PC-9 (cell line): ENCODE measurements at regions of chr15 and their contacts with region 1.

Region 1: GRCh38 chr15:88246666-88247446 is 9.7 kb downstream of the NTRK3 start:
- DNase-seq: peak in 1 of 2 experiments; percentile 63
- H3K4me3 ChIP-seq: no peak overlapping the region
- H3K27ac ChIP-seq: no peak overlapping the region
- H3K4me1 ChIP-seq: no peaks in the 10 kb centered on the region
- H3K27me3 ChIP-seq: peaks cover 7% of the 10 kb centered on the region; the same call in 1 of the 2 replicates
- CTCF ChIP-seq: peak; percentile 89

Region 2: DNA sequence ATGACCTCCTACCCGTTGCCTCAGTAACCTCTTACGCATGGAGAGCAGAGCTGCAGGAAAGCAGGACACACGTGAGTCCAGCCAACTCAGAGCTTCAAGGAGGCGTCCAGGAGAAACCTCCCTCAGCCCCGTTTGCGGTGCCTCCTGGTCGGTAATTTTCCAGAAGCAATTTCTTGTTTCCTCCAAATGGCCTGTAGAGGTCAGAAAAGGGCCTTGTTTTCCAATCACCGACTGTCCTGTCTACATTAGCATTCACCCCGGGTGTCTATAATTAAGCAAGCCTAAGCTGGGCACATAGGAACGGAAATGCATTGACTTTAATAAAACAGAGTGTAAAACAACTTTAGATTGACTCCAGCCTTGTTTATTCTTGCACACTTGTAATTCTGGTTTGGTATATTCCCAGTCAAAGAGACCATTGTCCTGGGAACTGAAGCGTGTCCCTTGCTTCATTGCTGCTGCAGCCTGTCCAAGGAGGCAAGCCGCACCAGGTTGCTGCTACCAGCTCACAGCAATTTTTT is 1331.0 kb before region 1 on chr15:
- CTCF ChIA-PET with region 1: no interaction called
- POLR2A ChIA-PET with region 1: no interaction called
- intact Hi-C with region 1: loop called (anchors 5 kb)
- DNase-seq: no peak
- H3K4me3 ChIP-seq: no peak overlapping the region
- H3K27ac ChIP-seq: no peak overlapping the region
- H3K4me1 ChIP-seq: no peaks in the 10 kb centered on the region
- H3K27me3 ChIP-seq: no peaks in the 10 kb centered on the region
- CTCF ChIP-seq: peak; percentile 52

Region 3: GRCh38 chr15:87033056-87033455 is 1213.8 kb before region 1 on chr15:
- CTCF ChIA-PET with region 1: no interaction called
- POLR2A ChIA-PET with region 1: no interaction called
- intact Hi-C with region 1: loop called (anchors 5 kb)
- DNase-seq: no peak
- H3K4me3 ChIP-seq: no peak overlapping the region
- H3K27ac ChIP-seq: no peak overlapping the region
- H3K4me1 ChIP-seq: no peaks in the 10 kb centered on the region
- H3K27me3 ChIP-seq: no peaks in the 10 kb centered on the region
- CTCF ChIP-seq: peak; percentile 27; the same call in 1 of the 2 replicates

Region 4: DNA sequence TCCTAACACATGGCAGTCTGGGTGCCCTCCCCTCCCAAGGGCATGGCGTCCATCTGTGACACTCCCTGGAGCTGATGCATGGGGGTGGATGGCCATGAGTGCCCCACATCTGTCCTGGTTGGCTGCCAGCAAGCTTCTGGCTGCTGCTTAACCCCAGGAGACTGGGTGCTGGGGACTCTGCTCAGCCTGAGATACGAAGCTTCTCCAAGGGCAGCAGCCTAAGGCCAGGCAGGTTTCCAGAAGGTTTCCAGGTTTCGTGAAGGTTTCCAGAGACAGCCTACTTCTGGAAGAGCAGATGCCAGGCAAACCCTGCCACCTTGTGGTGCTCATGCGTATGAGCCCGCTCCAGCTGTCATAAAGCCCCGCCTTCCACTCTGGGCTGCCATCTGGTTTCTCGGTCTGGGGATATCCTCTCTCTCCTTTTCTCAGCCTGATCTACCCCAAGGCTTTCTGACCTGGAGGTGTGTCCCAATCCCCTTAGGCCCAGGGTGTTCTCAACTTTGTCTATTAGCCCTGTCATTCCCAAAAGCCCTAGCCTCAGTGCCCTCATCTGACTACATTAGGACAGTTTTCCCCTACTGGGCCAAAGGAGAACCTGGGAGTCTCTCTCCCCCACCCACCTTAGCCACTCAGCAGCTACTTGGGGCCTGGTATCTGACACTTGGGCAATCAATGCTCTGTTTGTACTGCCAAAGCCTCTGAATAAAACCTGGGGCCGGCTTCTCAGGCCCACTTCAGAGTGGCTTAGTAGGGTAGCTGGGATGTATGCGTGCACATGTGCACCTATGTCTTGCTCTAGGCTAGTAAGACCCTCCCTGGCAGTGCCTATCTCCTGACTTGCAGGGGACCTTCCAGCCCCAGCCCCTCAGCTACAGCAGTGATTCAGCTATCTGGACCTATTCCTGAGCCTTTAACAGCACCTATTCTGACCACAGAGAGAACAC is 208.3 kb after region 1 on chr15:
- CTCF ChIA-PET with region 1: no interaction called
- POLR2A ChIA-PET with region 1: no interaction called
- intact Hi-C with region 1: loop called (anchors 10 kb)
- DNase-seq: peak; percentile 41 to 51
- H3K4me3 ChIP-seq: no peak overlapping the region
- H3K27ac ChIP-seq: no peak overlapping the region
- H3K4me1 ChIP-seq: no peaks in the 10 kb centered on the region
- H3K27me3 ChIP-seq: no peaks in the 10 kb centered on the region; the same call in 1 of the 2 replicates
- CTCF ChIP-seq: peak; percentile 72

Region 5: GRCh38 chr15:88782506-88782905 is 535.6 kb after region 1 on chr15:
- CTCF ChIA-PET with region 1: no interaction called
- POLR2A ChIA-PET with region 1: no interaction called
- intact Hi-C with region 1: no loop called
- DNase-seq: no peak
- H3K4me3 ChIP-seq: no peak overlapping the region
- H3K27ac ChIP-seq: no peak overlapping the region
- H3K4me1 ChIP-seq: no peaks in the 10 kb centered on the region
- H3K27me3 ChIP-seq: peaks cover 60% of the 10 kb centered on the region
- CTCF ChIP-seq: no peak